ENCODE measurements at regions of chr16 and their contacts with region 1.

Region 1: GRCh38 chr16:23072084-23072599 is 77.1 kb downstream of the USP31 start:
- DNase-seq: peak; percentile 92

Region 2: DNA sequence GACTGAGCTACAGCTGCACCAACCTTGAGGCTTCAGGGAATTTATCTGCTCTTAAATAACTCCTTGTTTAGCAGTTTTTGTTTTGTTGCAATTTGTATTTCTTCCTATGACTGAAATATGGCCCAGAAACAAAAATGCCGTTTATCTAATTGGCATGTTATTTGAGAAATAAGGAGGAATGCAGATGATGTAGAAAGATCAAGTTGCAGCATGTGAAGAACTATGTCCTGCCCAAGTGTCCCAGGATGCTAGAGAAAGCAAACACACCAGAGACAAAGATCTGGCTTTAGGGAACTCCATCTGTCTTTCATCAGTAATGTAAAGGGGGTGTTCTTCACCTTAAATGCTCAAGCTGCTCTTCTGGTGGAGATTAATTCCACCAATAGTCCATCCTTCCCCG is 47.4 kb after region 1 on chr16:
- intact Hi-C with region 1: loop called (anchors 5 kb)
- DNase-seq: no peak

Region 3: DNA sequence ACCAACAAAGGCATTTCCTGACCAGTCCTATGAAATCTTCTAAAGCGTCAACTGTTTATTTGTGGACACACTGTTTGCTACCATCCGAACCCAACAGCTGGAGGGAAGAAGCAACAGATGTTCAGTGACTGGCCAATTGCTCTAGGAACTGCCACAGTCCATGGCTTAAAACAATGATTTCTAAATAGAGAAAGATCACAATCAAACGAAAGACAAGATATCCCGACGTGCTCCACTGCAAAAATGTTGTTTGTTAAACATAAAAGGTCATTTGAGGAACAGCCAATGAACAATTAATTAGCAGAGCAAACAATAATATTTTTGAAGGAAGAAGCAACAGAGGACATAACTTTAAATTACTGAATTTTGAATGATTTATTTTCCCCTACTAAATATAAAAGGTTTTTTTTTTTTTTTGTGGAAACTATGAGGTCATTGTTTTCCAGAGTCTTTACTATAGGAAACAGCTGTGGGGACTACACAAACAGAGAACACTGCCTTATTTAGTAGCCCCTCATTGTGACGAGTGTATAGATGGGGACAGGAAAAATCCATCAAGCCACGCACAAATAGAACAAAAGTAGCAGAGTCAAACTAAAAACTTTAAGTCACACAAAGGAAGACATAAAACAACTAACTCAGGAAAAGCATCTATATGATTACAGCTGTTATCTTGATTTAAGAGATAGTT is 59.9 kb after region 1 on chr16:
- intact Hi-C with region 1: loop called (anchors 5 kb)
- DNase-seq: no peak

Region 4: DNA sequence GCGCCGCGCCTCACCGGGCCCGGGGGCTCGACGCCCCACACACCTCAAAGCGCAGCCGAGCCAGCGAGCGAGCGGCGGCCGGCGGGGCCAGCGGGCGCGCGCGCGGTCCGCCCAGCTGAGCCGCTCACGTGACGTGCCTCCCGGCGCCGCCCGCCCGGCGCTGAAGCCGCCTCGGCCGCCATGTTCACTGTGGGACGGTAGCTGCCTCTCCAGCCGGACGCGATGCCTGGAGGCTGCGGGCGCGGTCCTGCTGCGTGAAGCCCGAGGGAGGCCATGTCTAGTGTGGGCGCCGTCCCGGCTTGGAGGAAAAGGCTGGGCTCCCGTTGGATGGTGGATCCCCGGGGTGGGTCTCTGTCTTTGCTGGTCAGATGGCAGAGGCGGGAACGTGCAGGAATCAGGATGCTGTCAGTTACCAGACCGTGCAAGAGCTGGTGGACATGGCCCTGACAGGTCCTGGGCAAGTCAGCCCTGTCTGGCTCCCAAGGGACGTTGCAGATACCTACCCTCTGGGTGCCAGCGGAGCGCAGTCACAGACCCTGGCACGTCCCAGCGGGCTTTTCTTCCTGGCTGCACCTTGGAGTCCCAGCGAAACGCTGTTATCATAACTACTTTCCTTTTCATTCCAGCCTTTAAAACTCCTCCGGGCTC is 77.3 kb after region 1 on chr16 and contains the start of gene USP31:
- intact Hi-C with region 1: loop called (anchors 2 kb)
- DNase-seq: peak; percentile 98
- total RNA-seq, gene USP31: 21.6 TPM